Sigmoid colon (tissue), 7 donors: ENCODE measurements at regions of chr6 and their contacts with region 1.

Region 1: GRCh38 chr6:154510143-154510905 is at the start of gene CNKSR3:
- DNase-seq: peak; percentile 96
- H3K4me3 ChIP-seq: peak within 1 kb of the TSS; percentile 62 to 81 (median 76)
- H3K27ac ChIP-seq: peak within 1 kb of the TSS; percentile 93 to 98 (median 95)
- H3K4me1 ChIP-seq: peaks cover 0 to 44% (median 37%) of the 10 kb centered on the region in 4 donors
- H3K27me3 ChIP-seq: no peaks in the 10 kb centered on the region
- CTCF ChIP-seq: no peak
- EP300 ChIP-seq: no peak
- POLR2A ChIP-seq: peak; percentile 46 to 77
- total RNA-seq, gene CNKSR3: 12.8 to 16.8 (median 14.4) TPM

Region 2: GRCh38 chr6:154448448-154449096 is 61.8 kb before region 1 on chr6:
- intact Hi-C with region 1: loop called (anchors 2 kb)
- DNase-seq: peak; percentile 87
- H3K4me3 ChIP-seq: peak overlapping the region in 1 of 4 donors; percentile 20
- H3K27ac ChIP-seq: peak overlapping the region; percentile 79 to 90 (median 82)
- H3K4me1 ChIP-seq: peaks cover 0 to 78% (median 53%) of the 10 kb centered on the region in 4 donors
- H3K27me3 ChIP-seq: no peaks in the 10 kb centered on the region
- CTCF ChIP-seq: peak in 3 of 4 experiments; percentile 32 to 46 (median 41)
- EP300 ChIP-seq: peak; percentile 78 to 97 (median 88)
- POLR2A ChIP-seq: no peak

Region 3: DNA sequence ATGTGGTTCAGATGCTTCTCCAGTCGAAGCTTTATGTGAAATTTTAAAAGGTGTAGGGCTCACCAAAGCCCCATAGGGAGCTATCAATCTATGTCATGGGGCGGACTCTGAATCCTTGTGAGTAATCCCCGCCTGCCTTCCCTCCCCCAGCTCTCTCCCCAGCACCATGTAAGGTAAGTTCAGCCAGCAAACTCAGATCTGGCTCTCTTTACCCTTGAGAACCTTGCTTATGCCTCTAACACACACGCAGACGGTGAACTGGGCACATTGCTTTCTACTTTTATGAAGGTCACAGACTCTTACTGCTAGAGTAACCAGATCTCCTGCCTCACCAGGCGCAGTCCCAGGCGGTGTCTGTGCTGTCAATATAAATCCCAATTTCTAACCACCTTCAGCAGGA is 82.8 kb after region 1 on chr6:
- intact Hi-C with region 1: loop called (anchors 2 kb)
- DNase-seq: peak; percentile 91
- H3K4me3 ChIP-seq: no peak overlapping the region
- H3K27ac ChIP-seq: peak overlapping the region; percentile 52 to 88 (median 82)
- H3K4me1 ChIP-seq: peaks cover 0 to 27% (median 16%) of the 10 kb centered on the region in 4 donors
- H3K27me3 ChIP-seq: no peaks in the 10 kb centered on the region
- CTCF ChIP-seq: no peak
- EP300 ChIP-seq: peak; percentile 73 to 94 (median 82)
- POLR2A ChIP-seq: no peak

Region 4: DNA sequence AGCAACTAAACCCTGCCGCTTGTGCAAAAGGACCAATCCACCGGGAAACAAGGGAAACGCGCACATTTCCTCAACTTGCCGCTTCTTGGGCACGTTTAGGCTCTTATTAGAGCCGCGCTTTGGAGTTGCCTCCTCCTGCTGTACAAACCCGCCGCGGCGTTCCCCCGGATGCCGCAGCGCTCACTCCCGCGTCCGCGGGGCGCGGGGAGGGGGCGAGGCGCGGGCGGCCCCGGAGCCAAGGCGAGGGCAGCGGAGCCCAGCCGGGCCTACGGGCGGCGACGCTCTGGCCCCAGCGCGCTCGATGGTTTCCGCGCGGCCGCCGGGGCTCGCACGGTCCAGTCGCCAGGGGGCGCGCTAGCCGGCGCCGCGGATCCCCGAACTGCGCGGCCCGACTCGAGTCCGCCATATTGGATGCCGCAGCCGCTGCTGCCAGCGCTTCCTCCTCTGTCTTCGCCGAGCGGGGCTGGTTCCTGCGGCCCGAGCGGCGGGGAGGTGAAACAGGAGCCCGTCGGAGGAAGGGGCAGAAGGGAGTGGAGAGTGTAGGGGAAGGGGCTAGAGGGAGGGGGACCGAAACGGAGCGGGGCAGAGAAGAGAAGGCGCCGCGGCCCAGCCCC is 222.8 kb after region 1 on chr6 and contains the start of gene SCAF8:
- intact Hi-C with region 1: loop called (anchors 10 kb)
- DNase-seq: peak; percentile 87
- H3K4me3 ChIP-seq: peak within 1 kb of the TSS; percentile 74 to 98 (median 98)
- H3K27ac ChIP-seq: peak within 1 kb of the TSS; percentile 96 to 100 (median 100)
- H3K4me1 ChIP-seq: peaks cover 0 to 46% (median 44%) of the 10 kb centered on the region in 4 donors
- H3K27me3 ChIP-seq: no peaks in the 10 kb centered on the region
- CTCF ChIP-seq: peak in 2 of 4 experiments; percentile 19 to 84
- EP300 ChIP-seq: peak in 1 of 4 donors; percentile 1
- POLR2A ChIP-seq: peak in 1 of 2 donors; percentile 35
- total RNA-seq, gene SCAF8: 37.1 to 46.3 (median 40.8) TPM